Activated B cell treated with CpG ODN at 0.5 μM for 24 hours (primary cell): ENCODE measurements at regions of chr11 and their contacts with region 1.

Region 1: DNA sequence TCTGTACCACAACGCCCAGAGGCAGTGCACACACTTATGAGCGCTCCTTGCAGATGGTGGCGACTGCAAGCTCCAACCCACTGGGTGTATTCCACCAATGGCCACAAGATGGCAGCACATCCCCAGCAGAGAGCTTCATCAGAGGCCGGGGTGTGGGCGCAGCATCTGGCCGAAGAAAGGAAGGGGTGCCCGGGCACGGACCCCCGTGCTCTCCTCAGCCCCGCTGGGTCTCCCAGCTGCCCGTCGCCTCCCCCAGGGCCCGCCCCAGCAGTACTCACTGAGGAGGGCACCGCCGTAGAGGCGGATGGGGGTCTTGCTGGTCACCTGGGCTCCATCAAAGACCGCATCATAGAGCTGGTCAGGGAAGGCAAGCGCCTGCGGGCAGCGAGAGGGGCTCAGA is 14.2 kb downstream of the TP53I11 start:
- DNase-seq: peak; percentile 84
- ATAC-seq: peak; percentile 95
- H3K4me3 Mint-ChIP-seq: no peak overlapping the region
- H3K27ac Mint-ChIP-seq: no peak overlapping the region
- H3K4me1 Mint-ChIP-seq: peaks cover 27% of the 10 kb centered on the region
- H3K27me3 Mint-ChIP-seq: no peaks in the 10 kb centered on the region
- CTCF ChIP-seq: peak; percentile 71

Region 2: DNA sequence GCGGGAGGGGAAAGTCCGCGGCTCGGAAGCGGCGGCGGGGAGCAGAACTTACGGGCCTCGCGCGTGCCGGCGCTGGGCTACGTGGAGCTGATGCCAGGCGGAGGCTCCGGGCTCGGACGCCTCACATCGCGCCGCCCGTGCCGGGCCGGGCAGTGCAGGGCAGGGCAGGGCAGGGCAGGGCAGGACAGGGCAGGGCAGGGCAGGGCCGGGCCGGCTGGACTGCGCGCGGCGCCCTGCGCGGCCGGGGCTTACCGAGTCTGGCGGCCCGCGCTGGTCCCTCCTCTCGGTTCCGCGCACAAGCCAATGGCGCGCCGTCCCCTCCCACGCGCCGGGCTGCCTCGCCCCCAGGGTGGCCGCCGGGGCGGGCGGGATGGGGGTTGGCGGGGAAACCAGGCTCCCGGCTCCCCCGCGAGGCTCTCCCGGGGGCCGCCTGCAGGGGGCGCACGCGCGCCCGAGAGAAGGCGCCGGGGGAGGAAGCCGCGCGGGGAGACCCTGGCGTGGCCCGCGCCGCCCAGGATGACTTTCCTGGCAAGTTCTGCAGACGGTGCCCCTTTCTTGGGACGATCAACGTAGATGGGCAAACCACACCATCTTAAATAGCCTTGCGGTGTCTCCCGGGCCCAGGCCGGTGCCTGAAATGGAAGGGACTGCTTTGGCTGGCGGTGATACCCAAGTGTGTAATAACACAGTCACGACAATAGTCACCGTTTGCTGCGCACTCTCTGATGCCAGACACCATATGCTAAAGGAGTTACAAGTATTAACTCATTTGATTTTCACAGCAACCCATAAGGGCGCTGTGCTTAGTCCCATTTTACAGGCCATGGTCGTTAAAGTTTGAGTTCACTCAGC is 14.3 kb after region 1 on chr11 and contains the start of gene TP53I11:
- CTCF ChIA-PET with region 1: interaction called, 35 read pairs
- POLR2A ChIA-PET with region 1: interaction called, 9 read pairs
- intact Hi-C with region 1: loop called (anchors 1 kb)
- DNase-seq: peak; percentile 74
- ATAC-seq: peak; percentile 76
- H3K4me3 Mint-ChIP-seq: peak within 1 kb of the TSS; percentile 91
- H3K27ac Mint-ChIP-seq: peak within 1 kb of the TSS; percentile 87
- H3K4me1 Mint-ChIP-seq: peaks cover 60% of the 10 kb centered on the region
- H3K27me3 Mint-ChIP-seq: no peaks in the 10 kb centered on the region
- CTCF ChIP-seq: peak; percentile 44
- total RNA-seq, gene TP53I11: 145 and 175 TPM in 2 replicates

Region 3: DNA sequence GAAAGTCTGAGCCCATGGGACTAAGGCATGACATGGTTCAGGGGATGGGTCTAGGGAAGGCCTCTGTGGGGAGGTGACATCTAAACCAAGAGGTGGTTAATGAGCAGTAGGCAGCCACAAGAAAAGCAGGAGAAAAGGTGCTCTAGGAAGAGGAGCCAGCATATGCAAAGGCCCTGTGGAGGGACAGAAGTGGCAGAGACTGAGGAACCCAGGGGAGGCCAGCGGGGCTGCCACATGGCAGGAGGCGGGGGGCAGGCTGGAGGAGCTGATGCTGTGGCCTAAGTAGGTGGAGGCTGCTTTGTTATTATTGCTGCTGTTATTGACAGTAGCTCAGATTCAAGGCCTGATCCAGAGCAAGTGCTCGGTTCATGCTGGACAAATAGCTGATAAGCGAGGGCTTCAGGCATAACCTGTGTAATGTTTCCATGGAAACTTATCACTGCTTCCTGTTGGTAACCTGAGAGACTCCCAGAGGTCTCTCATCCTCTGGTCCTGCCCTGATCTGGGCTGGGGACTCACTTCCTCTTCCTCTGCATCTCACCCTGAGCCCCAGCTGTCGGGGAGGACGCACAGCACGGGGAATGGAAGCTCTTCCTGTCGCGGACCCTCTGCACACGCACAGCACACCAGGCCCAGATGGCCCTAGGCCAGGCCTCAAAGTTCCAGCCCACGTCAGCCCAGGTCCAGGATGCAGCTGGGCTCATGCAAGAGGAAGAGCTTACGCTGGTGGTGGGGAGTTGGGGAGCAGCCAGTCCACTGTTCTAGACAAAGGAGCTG is 89.4 kb after region 1 on chr11:
- CTCF ChIA-PET with region 1: interaction called, 25 read pairs
- POLR2A ChIA-PET with region 1: interaction called, 10 read pairs
- intact Hi-C with region 1: no loop called
- DNase-seq: peak; percentile 48
- ATAC-seq: peak; percentile 46
- H3K4me3 Mint-ChIP-seq: peak overlapping the region; percentile 54
- H3K27ac Mint-ChIP-seq: peak overlapping the region; percentile 93
- H3K4me1 Mint-ChIP-seq: peaks cover 65% of the 10 kb centered on the region
- H3K27me3 Mint-ChIP-seq: no peaks in the 10 kb centered on the region
- CTCF ChIP-seq: no peak

Region 4: DNA sequence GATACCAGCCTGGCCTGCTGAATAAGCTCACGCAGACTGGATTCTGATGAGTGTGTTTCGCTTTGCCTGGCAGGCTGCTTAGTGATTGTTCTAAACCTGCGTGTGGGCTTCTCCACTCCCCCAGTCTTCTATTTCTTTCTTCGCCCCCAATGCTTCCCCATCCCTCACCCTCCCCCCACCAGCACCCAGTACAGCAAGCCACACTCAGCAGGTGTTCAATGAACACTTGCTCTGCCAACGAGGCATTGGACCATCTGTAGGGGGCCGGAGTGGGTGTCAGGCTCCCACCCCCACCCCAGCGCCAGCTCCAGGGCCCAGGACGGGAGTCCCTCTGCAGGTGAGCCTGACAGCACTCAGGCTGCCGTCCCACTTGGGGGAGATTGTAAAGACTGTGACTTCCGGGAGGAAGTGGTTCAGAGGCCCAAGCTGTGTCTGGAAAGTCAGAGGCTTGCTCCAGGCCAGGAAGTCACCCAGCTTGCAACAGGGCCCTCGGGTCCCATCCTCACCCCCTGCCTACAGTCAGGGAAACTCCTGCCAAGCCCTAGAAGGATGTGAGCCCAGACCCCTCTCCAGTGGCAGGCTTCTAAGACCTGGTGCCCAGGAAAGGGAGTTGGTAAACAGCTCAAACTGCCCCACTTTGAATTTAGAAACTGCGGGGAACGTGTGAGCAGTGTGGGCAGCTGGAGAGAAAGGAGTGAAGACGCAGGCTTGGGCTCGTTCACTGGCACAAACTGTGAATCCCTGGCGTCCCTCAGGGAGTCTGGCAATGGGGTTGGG is 143.6 kb after region 1 on chr11:
- CTCF ChIA-PET with region 1: interaction called, 10 read pairs
- POLR2A ChIA-PET with region 1: no interaction called
- intact Hi-C with region 1: no loop called
- DNase-seq: peak; percentile 45
- ATAC-seq: peak; percentile 71
- H3K4me3 Mint-ChIP-seq: peak overlapping the region; percentile 59
- H3K27ac Mint-ChIP-seq: peak overlapping the region; percentile 84
- H3K4me1 Mint-ChIP-seq: peaks cover 71% of the 10 kb centered on the region
- H3K27me3 Mint-ChIP-seq: no peaks in the 10 kb centered on the region
- CTCF ChIP-seq: no peak

Region 5: GRCh38 chr11:45332276-45332934 is 395.9 kb after region 1 on chr11:
- CTCF ChIA-PET with region 1: interaction called, 6 read pairs
- POLR2A ChIA-PET with region 1: no interaction called
- intact Hi-C with region 1: loop called (anchors 2 kb)
- DNase-seq: no peak
- ATAC-seq: peak; percentile 81
- H3K4me3 Mint-ChIP-seq: no peak overlapping the region
- H3K27ac Mint-ChIP-seq: no peak overlapping the region
- H3K4me1 Mint-ChIP-seq: peaks cover 2% of the 10 kb centered on the region
- H3K27me3 Mint-ChIP-seq: peaks cover 26% of the 10 kb centered on the region
- CTCF ChIP-seq: no peak